Mammary epithelial cell (primary cell): ENCODE measurements at regions of chr10 and their contacts with region 1.

Region 1: DNA sequence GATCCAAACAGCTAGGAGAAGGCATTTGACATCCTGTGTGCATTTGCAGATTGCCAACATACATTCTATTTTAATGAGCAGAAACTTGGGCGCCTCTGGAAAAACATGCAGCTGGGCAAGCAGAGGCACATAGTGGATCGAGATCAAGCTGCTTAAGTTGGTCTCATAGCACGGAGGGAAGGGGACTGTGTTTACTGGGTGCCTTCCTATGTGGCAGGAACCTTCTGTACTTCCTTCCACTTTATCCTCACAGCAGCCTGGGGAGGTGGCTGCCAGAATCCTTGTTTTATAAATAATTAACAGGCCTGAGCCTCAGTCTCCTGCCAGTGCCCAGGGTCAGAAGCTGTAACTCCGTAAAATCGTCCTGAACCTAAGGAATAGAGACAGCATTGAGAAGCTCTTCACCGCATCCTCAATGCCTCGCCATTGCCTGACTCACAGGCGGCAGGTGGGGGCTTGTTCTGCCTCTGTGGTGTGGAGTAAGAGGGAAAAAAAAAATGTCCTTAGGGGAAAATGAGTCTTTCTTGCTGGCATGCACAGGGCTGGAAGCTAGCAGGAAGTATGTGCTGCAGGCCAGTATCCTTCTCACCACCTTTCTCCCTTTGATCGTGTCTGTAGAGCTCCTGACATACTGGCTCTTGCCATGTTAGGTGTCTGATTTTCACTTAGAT is 6.2 kb downstream of the VWA2 start:
- DNase-seq: peak; percentile 97
- H3K4me3 ChIP-seq: peak overlapping the region; percentile 21 to 39 (median 38)
- H3K27ac ChIP-seq: peak overlapping the region; percentile 86
- H3K4me1 ChIP-seq: peaks cover 44% of the 10 kb centered on the region
- H3K27me3 ChIP-seq: no peaks in the 10 kb centered on the region
- CTCF ChIP-seq: no peak

Region 2: DNA sequence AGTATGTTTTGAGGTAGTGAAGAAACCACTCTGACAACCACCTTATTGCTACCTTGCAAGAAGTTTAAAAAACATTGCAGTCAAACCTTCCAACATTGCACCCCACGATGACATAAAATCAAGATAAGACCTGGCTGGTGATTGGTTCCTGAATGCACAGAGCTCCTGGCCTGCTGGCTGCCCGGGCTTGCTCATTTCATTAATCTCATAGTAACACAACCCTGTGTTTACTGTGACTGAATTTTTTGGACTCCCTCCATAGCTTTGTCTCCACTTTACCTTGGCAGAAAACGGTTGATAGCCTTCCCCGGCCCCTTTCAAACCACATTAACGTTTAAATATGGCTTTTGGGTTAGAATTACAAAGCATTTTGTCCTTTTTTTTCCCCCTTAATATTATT is 21.3 kb after region 1 on chr10:
- CTCF ChIA-PET with region 1: no interaction called
- dilution Hi-C with region 1: no loop called
- in situ Hi-C with region 1: no loop called
- intact Hi-C with region 1: loop called (anchors 1 kb)
- DNase-seq: peak; percentile 90
- H3K4me3 ChIP-seq: no peak overlapping the region
- H3K27ac ChIP-seq: peak overlapping the region; percentile 72
- H3K4me1 ChIP-seq: peaks cover 37% of the 10 kb centered on the region
- H3K27me3 ChIP-seq: no peaks in the 10 kb centered on the region
- CTCF ChIP-seq: no peak

Region 3: GRCh38 chr10:114271779-114272167 is 26.5 kb after region 1 on chr10:
- CTCF ChIA-PET with region 1: no interaction called
- dilution Hi-C with region 1: no loop called
- in situ Hi-C with region 1: no loop called
- intact Hi-C with region 1: loop called (anchors 1 kb)
- DNase-seq: peak; percentile 96
- H3K4me3 ChIP-seq: no peak overlapping the region
- H3K27ac ChIP-seq: peak overlapping the region; percentile 58
- H3K4me1 ChIP-seq: peaks cover 28% of the 10 kb centered on the region
- H3K27me3 ChIP-seq: no peaks in the 10 kb centered on the region
- CTCF ChIP-seq: no peak